Endothelial cell of umbilical vein (primary cell): ENCODE measurements at regions of chr15 and their contacts with region 1.

Region 1: DNA sequence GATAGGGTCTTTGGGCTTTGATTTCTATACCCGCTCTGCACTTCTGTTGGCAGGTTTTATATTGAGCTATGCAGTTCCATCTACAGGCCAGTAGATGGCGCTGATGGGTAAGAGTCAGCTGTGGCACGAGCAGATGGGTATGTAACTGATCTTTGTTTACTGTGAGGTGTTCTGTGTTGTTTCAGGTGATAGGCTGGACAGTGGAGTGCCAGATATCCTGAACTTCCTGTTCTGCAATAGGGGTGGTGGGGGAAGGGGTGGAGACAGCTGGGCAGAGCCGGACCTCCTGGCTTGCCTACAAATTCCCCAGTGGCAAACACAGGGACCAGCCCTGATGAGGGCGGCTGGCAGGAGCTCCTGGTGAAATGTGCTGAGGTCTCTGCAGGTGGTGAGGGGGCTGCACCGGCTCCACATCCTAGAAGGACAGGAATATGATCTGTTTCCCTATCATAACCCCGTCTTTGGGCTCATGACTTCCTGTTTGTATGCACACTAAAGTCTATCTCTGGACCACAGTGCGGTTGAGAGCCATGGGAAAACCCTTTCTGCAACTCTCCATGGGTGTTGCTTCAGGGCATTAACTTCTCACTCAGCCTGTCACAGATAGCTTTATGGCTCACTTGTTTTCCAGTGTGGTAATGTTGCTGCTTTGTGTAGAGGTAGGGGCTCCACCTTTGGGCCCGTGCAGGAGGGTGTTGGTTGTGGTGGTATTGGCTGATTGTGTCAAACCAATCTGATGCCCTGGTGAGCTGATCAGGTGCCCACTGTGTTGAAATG is 13.4 kb upstream of the FAM98B start:
- DNase-seq: peak; percentile 67
- H3K4me3 ChIP-seq: no peak overlapping the region
- H3K27ac ChIP-seq: no peak overlapping the region
- H3K4me1 ChIP-seq: no peaks in the 10 kb centered on the region
- H3K27me3 ChIP-seq: peaks cover 26 to 60% of the 10 kb centered on the region in 2 experiments
- CTCF ChIP-seq: peak; percentile 85 to 86
- POLR2A ChIP-seq: no peak

Region 2: GRCh38 chr15:37995461-37996347 is 444.8 kb before region 1 on chr15:
- CTCF ChIA-PET with region 1: interaction called, 48 read pairs
- POLR2A ChIA-PET with region 1: no interaction called
- dilution Hi-C with region 1: no loop called
- intact Hi-C with region 1: no loop called
- DNase-seq: peak; percentile 58
- H3K4me3 ChIP-seq: no peak overlapping the region
- H3K27ac ChIP-seq: no peak overlapping the region
- H3K4me1 ChIP-seq: no peaks in the 10 kb centered on the region
- H3K27me3 ChIP-seq: peaks cover 19 to 49% of the 10 kb centered on the region in 2 experiments
- CTCF ChIP-seq: peak; percentile 43 to 46
- POLR2A ChIP-seq: no peak

Region 3: GRCh38 chr15:38421069-38421690 is 19.4 kb before region 1 on chr15:
- CTCF ChIA-PET with region 1: interaction called, 32 read pairs
- POLR2A ChIA-PET with region 1: no interaction called
- dilution Hi-C with region 1: no loop called
- intact Hi-C with region 1: no loop called
- DNase-seq: no peak
- H3K4me3 ChIP-seq: no peak overlapping the region
- H3K27ac ChIP-seq: no peak overlapping the region
- H3K4me1 ChIP-seq: no peaks in the 10 kb centered on the region
- H3K27me3 ChIP-seq: peaks cover 25 to 49% of the 10 kb centered on the region in 2 experiments
- CTCF ChIP-seq: no peak
- POLR2A ChIP-seq: no peak

Region 4: DNA sequence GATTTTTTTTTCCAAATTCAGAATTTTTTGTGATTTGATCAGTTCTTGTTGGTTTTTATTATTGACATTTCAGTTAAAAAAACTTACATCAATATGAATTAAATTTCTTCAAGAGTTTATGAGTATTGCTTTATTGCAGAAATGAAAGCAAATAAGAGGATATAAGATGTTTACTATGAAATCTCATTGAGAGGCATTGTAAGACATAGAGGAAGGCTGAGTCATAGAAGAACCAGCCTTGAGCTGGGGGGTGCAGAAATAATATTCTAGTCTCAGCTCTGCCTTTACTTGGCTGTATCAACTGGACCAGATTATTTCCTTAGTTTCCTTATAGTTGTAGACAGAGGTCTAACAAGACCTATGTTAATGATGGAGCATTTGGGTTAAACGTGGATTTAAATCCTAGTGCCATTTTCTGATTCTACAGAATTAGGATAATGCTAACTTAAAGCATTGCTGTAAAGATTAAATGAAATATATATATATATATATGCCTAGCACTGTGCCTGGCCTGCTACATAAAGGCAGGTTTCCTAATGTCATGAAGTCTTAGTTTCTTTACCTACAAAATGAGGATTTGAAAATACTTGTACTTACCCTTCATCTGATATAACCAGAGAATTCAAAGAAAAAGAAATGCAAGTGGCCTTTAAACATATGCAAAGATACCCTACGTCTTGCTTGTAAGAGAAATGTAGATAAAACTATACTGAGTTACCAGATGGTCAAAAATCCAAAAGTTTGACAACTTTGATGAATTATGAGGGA is 20.7 kb after region 1 on chr15:
- CTCF ChIA-PET with region 1: interaction called, 26 read pairs
- POLR2A ChIA-PET with region 1: no interaction called
- dilution Hi-C with region 1: no loop called
- intact Hi-C with region 1: no loop called
- DNase-seq: peak; percentile 70
- H3K4me3 ChIP-seq: peak overlapping the region in 1 of 3 experiments; percentile 17
- H3K27ac ChIP-seq: no peak overlapping the region
- H3K4me1 ChIP-seq: peaks cover 10% of the 10 kb centered on the region
- H3K27me3 ChIP-seq: no peaks in the 10 kb centered on the region
- CTCF ChIP-seq: no peak
- POLR2A ChIP-seq: no peak

Region 5: GRCh38 chr15:38496151-38496550 is 55.6 kb after region 1 on chr15:
- CTCF ChIA-PET with region 1: no interaction called
- POLR2A ChIA-PET with region 1: no interaction called
- dilution Hi-C with region 1: no loop called
- intact Hi-C with region 1: no loop called
- DNase-seq: no peak
- H3K4me3 ChIP-seq: no peak overlapping the region
- H3K27ac ChIP-seq: no peak overlapping the region
- H3K4me1 ChIP-seq: no peaks in the 10 kb centered on the region
- H3K27me3 ChIP-seq: no peaks in the 10 kb centered on the region
- CTCF ChIP-seq: no peak
- POLR2A ChIP-seq: no peak

Region 6: DNA sequence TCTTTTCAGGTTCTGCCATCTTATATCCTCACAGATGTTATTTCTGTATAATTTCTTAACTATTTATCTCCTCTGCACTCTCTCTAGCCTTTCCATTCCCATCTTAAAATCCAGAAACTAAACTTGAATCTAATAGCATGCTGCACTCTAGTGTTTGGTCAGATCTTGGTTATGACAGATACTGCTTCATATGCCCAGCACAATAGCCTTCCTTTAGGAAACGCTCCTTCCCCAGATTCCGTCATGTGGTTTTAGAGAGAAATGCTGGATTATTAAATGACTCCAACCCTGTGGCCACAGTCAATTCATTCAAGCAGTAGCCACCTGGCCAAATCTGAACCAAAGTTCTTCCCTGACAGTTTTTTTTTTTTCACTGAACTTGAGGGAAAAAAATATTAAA is 104.6 kb after region 1 on chr15:
- CTCF ChIA-PET with region 1: interaction called, 10 read pairs
- POLR2A ChIA-PET with region 1: no interaction called
- dilution Hi-C with region 1: no loop called
- intact Hi-C with region 1: no loop called
- DNase-seq: no peak
- H3K4me3 ChIP-seq: no peak overlapping the region
- H3K27ac ChIP-seq: no peak overlapping the region
- H3K4me1 ChIP-seq: no peaks in the 10 kb centered on the region
- H3K27me3 ChIP-seq: peaks cover 12 to 25% of the 10 kb centered on the region in 2 experiments
- CTCF ChIP-seq: no peak
- POLR2A ChIP-seq: no peak

Region 7: DNA sequence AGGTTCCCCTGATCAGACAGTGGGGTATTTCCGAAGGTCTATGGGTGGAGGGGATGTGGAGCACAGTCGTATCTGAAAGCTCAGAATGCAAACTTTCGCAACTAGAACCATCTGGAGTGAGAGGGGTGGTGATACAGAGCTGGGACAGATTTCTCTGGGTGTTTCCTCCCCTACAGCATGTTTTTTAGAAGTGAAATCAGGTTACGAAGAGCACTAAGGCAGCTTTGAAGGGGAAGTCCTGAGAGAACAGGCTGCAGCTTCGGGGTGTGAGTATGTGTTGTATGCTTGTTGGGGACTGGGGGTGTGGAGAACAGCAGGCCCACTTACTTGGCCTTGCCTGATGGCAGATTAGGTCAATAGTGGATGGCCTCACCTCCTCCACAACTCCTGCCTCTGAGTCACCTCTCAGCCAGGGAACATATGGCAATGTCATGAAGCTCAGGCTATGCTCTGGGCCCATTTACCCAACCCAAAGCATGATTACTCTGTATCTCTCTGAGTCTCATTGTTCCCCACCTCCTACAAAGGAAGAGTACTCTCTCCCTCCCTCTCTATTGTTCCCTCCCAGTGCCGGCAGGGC is 231.2 kb after region 1 on chr15:
- CTCF ChIA-PET with region 1: interaction called, 14 read pairs
- POLR2A ChIA-PET with region 1: no interaction called
- dilution Hi-C with region 1: no loop called
- intact Hi-C with region 1: no loop called
- DNase-seq: no peak
- H3K4me3 ChIP-seq: no peak overlapping the region
- H3K27ac ChIP-seq: no peak overlapping the region
- H3K4me1 ChIP-seq: no peaks in the 10 kb centered on the region
- H3K27me3 ChIP-seq: peaks cover 22 to 33% of the 10 kb centered on the region in 2 experiments
- CTCF ChIP-seq: no peak
- POLR2A ChIP-seq: no peak

Region 8: DNA sequence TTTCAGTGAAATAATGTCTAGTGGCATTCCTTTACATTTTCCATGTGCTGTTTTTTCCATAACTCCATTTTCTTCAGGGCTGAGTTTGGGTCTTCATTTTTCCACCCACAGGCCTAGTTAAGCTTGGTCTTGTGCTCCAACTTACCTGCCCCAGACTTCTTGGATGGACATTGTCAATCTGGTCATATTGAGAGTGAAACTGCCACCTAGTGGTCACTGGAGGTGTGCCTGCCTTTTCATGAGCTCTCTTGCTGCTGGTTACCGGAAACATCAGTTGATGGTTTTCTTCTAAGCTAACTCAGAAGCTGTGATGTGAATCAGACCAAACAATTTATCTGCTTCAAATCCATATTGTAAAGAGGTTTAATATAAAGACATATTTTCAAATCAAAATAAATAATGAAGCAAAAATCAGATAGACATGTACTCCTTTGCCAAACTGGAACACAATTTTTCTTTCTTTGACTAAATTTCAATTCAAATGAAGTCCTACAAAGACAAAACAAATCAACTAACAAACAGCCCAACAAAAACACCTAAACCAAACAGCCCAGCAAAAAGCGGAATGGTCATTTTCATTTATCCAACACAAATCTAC is 259.2 kb after region 1 on chr15:
- CTCF ChIA-PET with region 1: interaction called, 152 read pairs
- POLR2A ChIA-PET with region 1: no interaction called
- dilution Hi-C with region 1: no loop called
- intact Hi-C with region 1: loop called (anchors 1 kb)
- DNase-seq: peak; percentile 71
- H3K4me3 ChIP-seq: no peak overlapping the region
- H3K27ac ChIP-seq: no peak overlapping the region
- H3K4me1 ChIP-seq: no peaks in the 10 kb centered on the region
- H3K27me3 ChIP-seq: no peaks in the 10 kb centered on the region
- CTCF ChIP-seq: peak; percentile 79 to 94
- POLR2A ChIP-seq: no peak